ENCODE measurements at regions of chr18 and their contacts with region 1.

Region 1: DNA sequence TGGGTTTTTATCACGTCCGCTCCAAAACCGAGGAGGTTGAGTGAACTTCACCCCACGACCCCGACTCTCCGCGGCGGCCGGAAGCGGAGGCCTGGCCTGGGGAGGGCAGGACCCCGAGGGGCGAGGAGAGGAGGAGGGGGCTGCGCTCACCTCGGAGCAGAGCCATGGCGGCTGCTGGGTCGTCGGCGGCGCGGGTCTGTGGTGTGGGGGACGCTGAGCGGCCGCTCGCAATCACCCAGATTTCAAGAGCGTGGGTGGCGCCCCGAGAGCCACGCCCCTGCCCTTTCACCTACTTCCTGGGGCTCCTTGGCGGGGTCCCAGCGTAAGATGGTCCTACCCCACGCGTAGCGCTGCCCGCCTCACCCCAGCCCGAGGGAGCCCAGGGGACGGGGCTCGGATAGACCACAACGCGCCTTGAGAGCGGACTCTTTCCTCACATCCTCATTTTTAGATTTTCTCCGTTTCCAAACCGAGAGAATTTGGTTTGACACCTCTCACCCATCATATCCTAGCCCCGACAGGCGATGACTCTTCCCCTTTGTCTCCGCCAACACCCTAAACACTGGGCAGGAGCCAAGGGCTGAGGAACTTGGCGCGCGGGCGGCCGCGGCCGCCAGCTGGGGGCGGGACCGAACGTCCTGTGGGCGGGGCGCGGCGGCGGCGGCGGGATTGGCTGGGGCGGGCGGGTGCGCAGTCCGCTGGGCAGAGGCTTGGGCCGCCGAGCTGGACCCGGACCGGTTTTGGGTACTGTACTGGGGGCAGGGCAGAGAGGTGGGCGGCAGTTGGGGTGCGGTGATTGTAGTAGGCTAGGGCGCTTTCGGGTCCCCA is at the start of gene ACAA2:
- DNase-seq: peak; percentile 48 to 87 (median 60)
- ATAC-seq: peak; percentile 93
- H3K4me3 ChIP-seq: peak within 1 kb of the TSS; percentile 87
- H3K4me3 Mint-ChIP-seq: peak within 1 kb of the TSS; percentile 89 to 99 (median 96)
- H3K27ac ChIP-seq: peak within 1 kb of the TSS; percentile 90
- H3K27ac Mint-ChIP-seq: peak within 1 kb of the TSS; percentile 91 to 99 (median 97)
- H3K4me1 ChIP-seq: peaks cover 20 to 39% of the 10 kb centered on the region in 2 donors
- H3K4me1 Mint-ChIP-seq: peaks cover 42 to 70% (median 63%) of the 10 kb centered on the region in 7 donors
- H3K27me3 ChIP-seq: no peaks in the 10 kb centered on the region
- H3K27me3 Mint-ChIP-seq: no peaks in the 10 kb centered on the region
- total RNA-seq, gene ACAA2: 15.4 to 94.7 (median 24.4) TPM

Region 2: GRCh38 chr18:48940854-48941611 is 872.5 kb before region 1 on chr18:
- CTCF ChIA-PET with region 1: no interaction called
- POLR2A ChIA-PET with region 1: no interaction called
- intact Hi-C with region 1: loop called (anchors 5 to 10 kb)
- DNase-seq: peak; percentile 53 to 98 (median 96)
- ATAC-seq: peak; percentile 91
- H3K4me3 ChIP-seq: peak overlapping the region; percentile 36
- H3K4me3 Mint-ChIP-seq: peak overlapping the region; percentile 78 to 94 (median 86)
- H3K27ac ChIP-seq: peak overlapping the region; percentile 49
- H3K27ac Mint-ChIP-seq: peak overlapping the region; percentile 80 to 98 (median 93)
- H3K4me1 ChIP-seq: peaks cover 64 to 85% of the 10 kb centered on the region in 2 donors
- H3K4me1 Mint-ChIP-seq: peaks cover 59 to 100% (median 95%) of the 10 kb centered on the region in 7 donors
- H3K27me3 ChIP-seq: no peaks in the 10 kb centered on the region
- H3K27me3 Mint-ChIP-seq: no peaks in the 10 kb centered on the region

Region 3: GRCh38 chr18:49723648-49724180 is 89.8 kb before region 1 on chr18:
- CTCF ChIA-PET with region 1: no interaction called
- POLR2A ChIA-PET with region 1: no interaction called
- intact Hi-C with region 1: no loop called
- DNase-seq: peak in 1 of 9 donors; percentile 30
- ATAC-seq: no peak
- H3K4me3 ChIP-seq: no peak overlapping the region
- H3K4me3 Mint-ChIP-seq: peak overlapping the region in 2 of 10 donors; percentile 4 to 29
- H3K27ac ChIP-seq: no peak overlapping the region
- H3K27ac Mint-ChIP-seq: no peak overlapping the region
- H3K4me1 ChIP-seq: no peaks in the 10 kb centered on the region
- H3K4me1 Mint-ChIP-seq: peaks cover 0 to 10% (median 4%) of the 10 kb centered on the region in 7 donors
- H3K27me3 ChIP-seq: no peaks in the 10 kb centered on the region
- H3K27me3 Mint-ChIP-seq: peaks cover 0 to 29% (median 16%) of the 10 kb centered on the region in 5 donors

Region 4: DNA sequence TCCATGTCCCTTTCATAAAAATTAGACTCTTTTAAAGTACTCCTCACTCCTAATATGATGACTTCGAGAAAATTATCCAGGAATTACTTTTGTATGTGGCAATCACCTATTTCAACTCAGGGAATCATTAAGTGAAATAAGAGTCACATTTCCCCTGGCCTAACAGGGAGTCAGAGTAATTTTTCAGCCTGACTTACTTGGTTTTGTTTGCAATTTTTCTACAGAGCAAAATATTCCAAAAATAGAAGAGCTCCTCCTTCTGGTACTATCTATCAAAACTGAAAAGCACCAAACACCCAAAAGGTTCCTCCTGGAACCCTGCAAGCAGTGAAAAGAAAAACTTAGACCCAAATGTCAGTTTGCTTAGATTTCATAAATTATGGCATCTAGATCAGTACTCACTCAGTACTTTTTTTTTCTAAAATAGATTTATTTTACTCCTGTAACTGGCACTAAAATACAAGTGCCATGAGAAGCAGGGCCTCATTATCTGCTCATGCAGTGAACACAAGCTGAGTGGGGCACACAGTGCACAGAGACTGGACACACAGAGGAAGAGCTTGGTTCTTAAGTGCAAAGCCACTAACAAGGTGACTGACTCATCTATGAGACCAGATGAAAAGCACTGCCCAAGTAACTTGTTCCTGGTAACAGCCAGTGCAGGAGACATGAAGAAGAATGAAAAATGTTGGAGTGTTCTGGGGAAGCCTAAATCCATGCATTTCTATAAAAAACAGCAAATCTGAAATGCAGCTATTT is 28.9 kb before region 1 on chr18:
- CTCF ChIA-PET with region 1: no interaction called
- POLR2A ChIA-PET with region 1: interaction called, 3 read pairs
- intact Hi-C with region 1: loop called (anchors 1 to 2 kb)
- DNase-seq: no peak
- ATAC-seq: no peak
- H3K4me3 ChIP-seq: no peak overlapping the region
- H3K4me3 Mint-ChIP-seq: peak overlapping the region in 5 of 10 donors; percentile 12 to 64 (median 30)
- H3K27ac ChIP-seq: no peak overlapping the region
- H3K27ac Mint-ChIP-seq: peak overlapping the region in 3 of 9 donors; percentile 29 to 48 (median 31)
- H3K4me1 ChIP-seq: peaks cover 12 to 46% of the 10 kb centered on the region in 2 donors
- H3K4me1 Mint-ChIP-seq: peaks cover 27 to 52% (median 42%) of the 10 kb centered on the region in 7 donors
- H3K27me3 ChIP-seq: no peaks in the 10 kb centered on the region
- H3K27me3 Mint-ChIP-seq: no peaks in the 10 kb centered on the region

Region 5: GRCh38 chr18:50281295-50281971 is 467.9 kb after region 1 on chr18 and contains the start of gene MBD1:
- CTCF ChIA-PET with region 1: no interaction called
- POLR2A ChIA-PET with region 1: no interaction called
- intact Hi-C with region 1: loop called (anchors 1 to 5 kb)
- DNase-seq: peak; percentile 90 to 99 (median 97)
- ATAC-seq: peak; percentile 94
- H3K4me3 ChIP-seq: peak within 1 kb of the TSS; percentile 94
- H3K4me3 Mint-ChIP-seq: peak within 1 kb of the TSS; percentile 90 to 99 (median 97)
- H3K27ac ChIP-seq: peak within 1 kb of the TSS; percentile 88
- H3K27ac Mint-ChIP-seq: peak within 1 kb of the TSS; percentile 93 to 99 (median 97)
- H3K4me1 ChIP-seq: peaks cover 21 to 33% of the 10 kb centered on the region in 2 donors
- H3K4me1 Mint-ChIP-seq: peaks cover 24 to 53% (median 45%) of the 10 kb centered on the region in 7 donors
- H3K27me3 ChIP-seq: no peaks in the 10 kb centered on the region
- H3K27me3 Mint-ChIP-seq: peaks cover 0 to 2% (median 0%) of the 10 kb centered on the region in 5 donors
- total RNA-seq, gene MBD1: 97.5 to 158 (median 118) TPM

Region 6: DNA sequence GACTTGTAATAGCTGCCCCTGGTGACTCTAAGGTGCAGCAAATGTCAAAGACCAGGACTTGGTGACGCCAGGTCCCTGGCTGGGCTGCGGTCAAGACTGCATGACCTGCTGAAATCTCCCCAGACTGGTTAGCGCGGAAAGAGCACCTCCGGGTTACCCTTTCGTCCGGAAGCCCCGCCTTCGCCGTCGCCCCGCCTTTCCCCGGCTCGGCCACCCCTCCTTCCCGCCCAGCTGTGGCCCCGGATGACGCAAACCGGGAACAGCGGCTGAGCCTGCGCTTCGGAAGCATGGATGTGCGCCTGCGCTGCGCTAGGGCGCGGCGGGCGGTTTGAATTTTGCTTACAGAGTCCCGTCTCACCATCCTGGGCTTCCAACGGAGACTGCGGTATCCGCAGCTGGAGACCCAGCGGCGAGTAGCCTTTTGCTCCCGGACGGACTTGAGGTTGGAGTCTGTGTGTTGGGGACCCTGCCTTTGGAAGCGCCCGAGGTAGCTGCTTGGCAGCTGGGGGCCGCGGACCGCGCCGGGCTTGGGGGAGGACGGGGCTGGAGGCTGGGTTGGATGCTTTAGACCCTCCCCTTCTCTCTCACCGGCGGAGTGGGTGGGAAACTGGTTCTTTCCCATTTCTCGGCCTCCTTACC is 561.3 kb after region 1 on chr18 and contains the start of gene SKA1:
- CTCF ChIA-PET with region 1: no interaction called
- POLR2A ChIA-PET with region 1: no interaction called
- intact Hi-C with region 1: loop called (anchors 10 kb)
- DNase-seq: peak; percentile 85 to 92 (median 89)
- ATAC-seq: peak; percentile 99
- H3K4me3 ChIP-seq: peak within 1 kb of the TSS; percentile 62
- H3K4me3 Mint-ChIP-seq: peak within 1 kb of the TSS; percentile 75 to 90 (median 80)
- H3K27ac ChIP-seq: peak within 1 kb of the TSS; percentile 71
- H3K27ac Mint-ChIP-seq: peak within 1 kb of the TSS; percentile 72 to 91 (median 87)
- H3K4me1 ChIP-seq: peaks cover 0 to 13% of the 10 kb centered on the region in 2 donors
- H3K4me1 Mint-ChIP-seq: peaks cover 0 to 34% (median 14%) of the 10 kb centered on the region in 7 donors
- H3K27me3 ChIP-seq: peaks cover 0 to 6% of the 10 kb centered on the region in 2 donors
- H3K27me3 Mint-ChIP-seq: peaks cover 0 to 8% (median 7%) of the 10 kb centered on the region in 5 donors
- total RNA-seq, gene SKA1: 0.27 to 24.8 (median 0.43) TPM

Measured in naive thymus-derived CD4-positive, alpha-beta T cell (primary cell).